Endothelial cell of umbilical vein (primary cell): ENCODE measurements at regions of chr2 and their contacts with region 1.

Region 1: GRCh38 chr2:169513926-169514325 is 4.4 kb downstream of the KLHL41 start:
- DNase-seq: no peak
- H3K4me3 ChIP-seq: no peak overlapping the region
- H3K27ac ChIP-seq: no peak overlapping the region
- H3K4me1 ChIP-seq: peaks cover 4% of the 10 kb centered on the region
- H3K27me3 ChIP-seq: no peaks in the 10 kb centered on the region
- CTCF ChIP-seq: no peak
- POLR2A ChIP-seq: no peak

Region 2: DNA sequence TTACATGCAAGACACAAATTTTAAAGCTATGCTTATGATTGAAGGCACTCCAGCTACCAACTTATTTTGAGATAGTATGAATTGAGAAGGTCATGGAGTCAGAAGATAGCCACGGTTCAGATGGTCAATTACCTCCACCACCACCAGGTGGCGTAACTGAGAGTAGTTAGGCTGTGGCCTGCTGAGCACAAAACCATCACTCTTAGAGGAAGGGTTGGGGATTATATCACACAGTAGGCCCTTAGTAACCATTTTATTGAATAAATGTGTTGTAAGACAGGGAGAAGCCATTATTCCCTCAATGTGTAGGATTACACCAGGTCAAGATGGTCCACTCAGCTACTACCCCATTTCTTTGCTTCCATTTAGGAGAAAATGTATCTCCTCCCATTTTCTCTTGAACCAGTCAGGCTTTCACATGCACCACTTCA is 14.4 kb after region 1 on chr2:
- CTCF ChIA-PET with region 1: interaction called, 11 read pairs
- POLR2A ChIA-PET with region 1: no interaction called
- dilution Hi-C with region 1: no loop called
- intact Hi-C with region 1: no loop called
- DNase-seq: peak; percentile 68
- H3K4me3 ChIP-seq: no peak overlapping the region
- H3K27ac ChIP-seq: no peak overlapping the region
- H3K4me1 ChIP-seq: no peaks in the 10 kb centered on the region
- H3K27me3 ChIP-seq: no peaks in the 10 kb centered on the region
- CTCF ChIP-seq: peak; percentile 76 to 80
- POLR2A ChIP-seq: no peak